AG04449 (cell line): ENCODE measurements at regions of chr1 and their contacts with region 1.

Region 1: DNA sequence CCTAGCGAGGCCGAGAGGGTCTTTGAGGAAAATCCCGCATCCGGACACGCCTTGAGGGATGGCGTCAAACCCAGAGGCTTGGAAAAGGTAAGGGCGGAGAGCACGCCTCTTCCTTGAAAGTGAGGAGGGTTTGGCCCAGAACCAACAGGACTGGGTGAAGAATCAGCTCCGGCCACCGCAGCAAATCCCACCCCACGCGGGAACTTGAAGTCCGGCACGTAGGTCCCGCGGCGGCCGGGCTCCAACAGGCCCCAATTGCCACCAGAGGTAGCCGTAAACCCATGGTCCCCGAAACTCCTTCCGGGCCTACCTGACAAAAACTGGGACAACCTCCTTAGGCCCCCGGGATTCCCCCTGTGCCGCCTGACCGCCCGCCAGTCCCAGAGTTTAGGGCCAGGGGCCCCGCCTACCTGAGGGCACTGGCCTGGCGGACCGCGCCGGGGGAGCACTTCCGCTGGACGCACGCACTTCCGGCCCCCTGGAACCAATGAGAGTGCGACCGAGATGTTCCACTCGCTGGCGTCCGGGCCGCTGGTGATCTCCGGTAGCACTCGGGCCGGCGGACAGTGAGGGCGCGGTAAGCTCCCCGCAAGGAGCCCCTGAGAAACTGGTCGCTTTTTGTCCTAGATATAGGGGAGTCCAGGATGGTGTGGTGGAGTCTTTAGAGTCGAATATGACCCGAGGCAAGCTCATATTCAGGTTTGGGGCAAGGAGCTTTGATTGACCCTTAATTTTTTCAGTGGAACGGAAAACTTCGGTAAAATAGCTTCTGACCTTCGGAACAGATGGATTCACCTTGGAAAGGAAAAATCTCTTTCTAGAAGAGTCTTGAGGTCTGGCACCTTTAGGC is at the starts of genes LZIC and NMNAT1:
- DNase-seq: peak; percentile 57
- H3K4me3 ChIP-seq: peak within 1 kb of the TSS; percentile 92
- CTCF ChIP-seq: no peak

Region 2: GRCh38 chr1:9960706-9961562 is 17.8 kb after region 1 on chr1:
- CTCF ChIA-PET with region 1: interaction called, 11 read pairs
- POLR2A ChIA-PET with region 1: no interaction called
- DNase-seq: no peak
- H3K4me3 ChIP-seq: no peak overlapping the region
- CTCF ChIP-seq: no peak

Region 3: DNA sequence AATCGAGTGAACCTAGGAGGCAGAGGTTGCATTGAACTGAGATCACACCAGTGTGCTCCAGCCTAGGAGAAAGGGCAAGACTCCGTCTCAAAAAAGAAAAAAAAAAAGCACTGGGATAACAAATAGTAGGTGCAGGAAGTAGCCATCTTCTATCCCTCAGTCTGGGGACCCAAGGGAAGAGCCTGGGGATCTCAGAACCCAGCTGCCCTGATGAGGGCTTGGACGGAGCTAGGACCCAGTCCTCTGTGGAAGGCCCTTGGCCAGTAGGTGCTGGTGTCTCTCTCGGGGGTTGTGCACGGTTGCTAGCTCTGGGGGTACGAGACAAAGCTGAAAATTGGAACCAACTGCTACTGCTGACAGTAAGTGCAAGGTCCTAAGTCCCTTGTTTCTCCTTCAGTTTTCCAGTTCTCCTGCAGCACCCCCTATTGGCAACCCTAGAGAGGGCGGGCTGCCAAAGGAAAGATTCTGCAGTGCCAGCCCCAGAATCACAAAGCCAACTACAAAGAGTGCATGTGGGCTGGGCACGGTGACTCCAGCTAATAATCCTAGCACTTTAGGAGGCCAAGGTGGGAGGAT is 209.6 kb after region 1 on chr1:
- CTCF ChIA-PET with region 1: interaction called, 13 read pairs
- POLR2A ChIA-PET with region 1: no interaction called
- DNase-seq: no peak
- H3K4me3 ChIP-seq: no peak overlapping the region
- CTCF ChIP-seq: peak; percentile 76